Activated naive CD4-positive, alpha-beta T cell treated with anti-CD3 and anti-CD28 coated beads for 36 hours (primary cell): ENCODE measurements at regions of chr5 and their contacts with region 1.

Region 1: GRCh38 chr5:153352685-153353219 is 137.7 kb upstream of the GRIA1 start:
- DNase-seq: peak; percentile 46
- H3K4me3 Mint-ChIP-seq: peak overlapping the region; percentile 46
- H3K27ac Mint-ChIP-seq: no peak overlapping the region
- H3K4me1 Mint-ChIP-seq: peaks cover 14% of the 10 kb centered on the region
- H3K27me3 Mint-ChIP-seq: peaks cover 19% of the 10 kb centered on the region

Region 2: DNA sequence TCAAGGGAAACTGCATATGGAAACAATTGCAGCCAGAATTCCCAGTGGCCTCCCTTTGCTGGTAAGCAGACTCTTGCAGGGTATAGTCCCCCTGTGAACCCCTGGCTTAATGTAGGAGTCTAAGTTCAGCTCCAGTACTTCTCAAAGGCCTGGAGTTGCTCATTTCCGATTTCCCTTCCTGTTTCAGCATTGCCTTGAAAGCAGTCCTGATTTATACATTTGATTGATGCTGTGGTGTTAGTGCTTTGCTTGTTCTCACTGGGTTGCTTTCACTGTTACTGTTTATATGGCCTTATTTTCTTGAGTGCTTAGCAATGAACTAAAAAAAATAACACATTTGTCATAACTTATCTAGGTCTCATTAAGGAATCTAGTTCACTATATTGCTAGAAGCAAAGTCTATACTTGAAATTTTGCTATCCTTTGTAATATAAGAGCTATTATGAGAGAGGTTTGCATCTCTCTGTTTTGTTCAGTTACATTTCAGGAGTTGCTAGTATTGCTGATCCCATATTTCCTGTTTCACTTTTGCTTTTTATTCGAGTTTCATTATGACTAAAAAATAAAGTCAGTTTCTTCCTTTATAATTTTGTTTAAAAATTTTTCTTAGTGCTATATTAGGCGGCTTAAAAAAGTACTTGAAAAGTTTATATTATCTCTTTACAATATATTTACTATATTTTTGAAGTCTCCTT is 825.2 kb before region 1 on chr5:
- CTCF ChIA-PET with region 1: no interaction called
- intact Hi-C with region 1: loop called (anchors 10 kb)
- DNase-seq: no peak
- H3K4me3 Mint-ChIP-seq: no peak overlapping the region
- H3K27ac Mint-ChIP-seq: no peak overlapping the region
- H3K4me1 Mint-ChIP-seq: peaks cover 12% of the 10 kb centered on the region
- H3K27me3 Mint-ChIP-seq: peaks cover 3% of the 10 kb centered on the region

Region 3: DNA sequence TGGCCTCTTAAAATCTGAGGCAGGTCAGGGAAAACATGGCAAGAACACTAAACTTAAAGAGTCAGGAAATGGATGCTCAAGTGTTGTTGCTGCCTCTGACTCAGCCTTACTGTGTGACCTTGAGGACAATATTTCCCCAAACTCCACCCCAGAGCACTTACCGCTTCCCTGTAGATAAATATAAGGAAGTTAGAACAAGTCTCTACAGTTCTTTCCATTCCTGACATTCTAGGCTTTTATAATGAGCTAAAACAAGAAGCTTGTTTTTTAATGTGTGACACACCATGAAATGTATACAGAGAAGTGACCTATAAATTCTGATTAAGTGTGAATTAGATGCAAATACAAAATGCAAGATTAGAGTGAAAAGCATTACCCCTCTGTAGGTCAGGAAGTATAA is 267.0 kb after region 1 on chr5:
- CTCF ChIA-PET with region 1: no interaction called
- intact Hi-C with region 1: no loop called
- DNase-seq: no peak
- H3K4me3 Mint-ChIP-seq: no peak overlapping the region
- H3K27ac Mint-ChIP-seq: no peak overlapping the region
- H3K4me1 Mint-ChIP-seq: no peaks in the 10 kb centered on the region
- H3K27me3 Mint-ChIP-seq: no peaks in the 10 kb centered on the region